Ovary (tissue), 10 donors: ENCODE measurements at regions of chr12 and their contacts with region 1.

Region 1: DNA sequence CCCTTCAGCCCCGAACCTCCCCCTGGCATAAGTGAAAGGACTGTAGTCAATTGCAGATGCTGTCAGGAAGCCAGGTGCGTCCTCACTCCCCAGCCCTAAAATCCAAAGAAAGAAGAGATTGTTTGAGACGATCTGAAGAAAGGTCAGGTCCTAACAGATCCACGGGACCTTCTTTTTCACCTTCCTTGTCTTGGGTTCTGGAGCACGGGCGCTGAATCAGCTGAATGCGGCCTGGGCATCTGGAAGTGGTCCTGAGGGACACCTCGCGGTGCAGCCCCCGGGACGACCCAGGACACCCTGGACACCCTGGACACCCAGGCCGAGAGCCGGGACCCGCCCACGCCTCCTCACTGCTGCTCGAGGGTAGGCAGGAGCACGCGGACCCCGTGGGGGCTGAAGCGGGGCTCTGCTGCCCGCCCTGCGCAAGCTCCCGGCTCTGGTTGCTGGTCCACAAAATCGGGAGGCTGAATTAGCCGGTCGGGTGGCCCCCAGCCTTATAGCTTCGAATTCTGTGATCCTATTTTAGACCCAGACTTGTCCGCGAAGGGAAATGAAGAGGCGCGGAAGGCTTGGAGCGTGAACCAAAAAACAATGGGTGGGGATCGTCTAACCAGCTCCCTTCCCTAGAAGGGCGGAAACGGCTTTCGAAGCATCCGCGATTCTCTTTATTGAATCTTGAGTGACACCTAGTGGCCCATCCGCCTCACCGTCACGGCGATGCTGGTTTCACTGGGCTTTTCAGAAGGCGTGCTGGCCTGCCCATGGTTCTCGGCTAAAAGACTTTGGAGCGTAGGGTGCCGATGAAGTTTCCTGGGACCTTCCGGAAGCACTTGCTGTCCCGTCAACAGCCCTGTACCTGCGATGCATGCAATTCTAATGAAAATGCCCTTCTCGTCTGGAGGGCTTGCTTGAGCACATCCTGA is 46.4 kb upstream of the PLXNC1 start:
- DNase-seq: peak; percentile 76 to 88 (median 86)
- H3K4me3 ChIP-seq: peak overlapping the region; percentile 63
- H3K27ac ChIP-seq: no peak overlapping the region
- H3K4me1 ChIP-seq: no peaks in the 10 kb centered on the region
- H3K27me3 ChIP-seq: no peaks in the 10 kb centered on the region
- CTCF ChIP-seq: peak; percentile 69 to 79 (median 69)
- EP300 ChIP-seq: no peak
- POLR2A ChIP-seq: no peak

Region 2: DNA sequence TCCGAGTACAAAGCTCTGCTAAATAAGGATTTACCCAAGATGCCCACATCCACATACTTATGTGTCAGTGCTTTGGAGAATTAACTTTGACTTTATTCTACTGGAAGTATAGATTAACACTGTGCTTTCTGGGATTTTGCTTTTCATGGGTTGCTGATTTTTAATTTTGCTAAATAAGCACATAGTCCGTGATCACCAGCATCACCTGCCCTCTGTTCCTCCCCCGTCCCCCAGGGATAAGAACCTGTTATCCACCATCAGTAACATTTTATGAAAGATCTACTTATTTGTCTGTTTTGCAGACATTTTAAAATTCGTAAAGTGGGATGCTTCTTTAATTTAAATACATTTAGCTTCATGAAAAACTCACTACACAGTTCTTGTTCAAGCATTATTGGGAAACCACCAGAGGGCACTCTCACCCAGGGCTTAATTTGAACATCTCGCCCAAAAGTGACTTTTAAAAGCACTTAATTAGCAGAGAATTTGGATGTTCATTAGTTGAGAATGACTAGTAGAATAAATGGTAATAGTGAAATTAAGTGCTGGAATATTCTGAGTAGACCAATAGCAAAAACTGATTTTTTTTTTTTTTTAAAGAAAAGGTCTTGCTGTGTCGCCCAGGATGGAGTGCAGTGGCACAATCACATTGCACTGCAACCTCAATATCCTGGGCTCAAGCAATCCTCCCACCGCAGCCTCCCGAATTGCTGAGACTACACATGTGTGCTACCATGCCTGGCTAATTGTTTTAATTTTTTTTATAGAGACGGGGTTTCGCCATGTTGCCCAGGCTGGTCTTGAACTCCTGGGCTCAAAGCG is 599.0 kb before region 1 on chr12:
- intact Hi-C with region 1: loop called (anchors 2 to 5 kb)
- DNase-seq: peak in 4 of 5 donors; percentile 12 to 58 (median 37)
- H3K4me3 ChIP-seq: no peak overlapping the region
- H3K27ac ChIP-seq: no peak overlapping the region
- H3K4me1 ChIP-seq: no peaks in the 10 kb centered on the region
- H3K27me3 ChIP-seq: no peaks in the 10 kb centered on the region
- CTCF ChIP-seq: peak; percentile 53 to 77 (median 63)
- EP300 ChIP-seq: no peak
- POLR2A ChIP-seq: no peak

Region 3: DNA sequence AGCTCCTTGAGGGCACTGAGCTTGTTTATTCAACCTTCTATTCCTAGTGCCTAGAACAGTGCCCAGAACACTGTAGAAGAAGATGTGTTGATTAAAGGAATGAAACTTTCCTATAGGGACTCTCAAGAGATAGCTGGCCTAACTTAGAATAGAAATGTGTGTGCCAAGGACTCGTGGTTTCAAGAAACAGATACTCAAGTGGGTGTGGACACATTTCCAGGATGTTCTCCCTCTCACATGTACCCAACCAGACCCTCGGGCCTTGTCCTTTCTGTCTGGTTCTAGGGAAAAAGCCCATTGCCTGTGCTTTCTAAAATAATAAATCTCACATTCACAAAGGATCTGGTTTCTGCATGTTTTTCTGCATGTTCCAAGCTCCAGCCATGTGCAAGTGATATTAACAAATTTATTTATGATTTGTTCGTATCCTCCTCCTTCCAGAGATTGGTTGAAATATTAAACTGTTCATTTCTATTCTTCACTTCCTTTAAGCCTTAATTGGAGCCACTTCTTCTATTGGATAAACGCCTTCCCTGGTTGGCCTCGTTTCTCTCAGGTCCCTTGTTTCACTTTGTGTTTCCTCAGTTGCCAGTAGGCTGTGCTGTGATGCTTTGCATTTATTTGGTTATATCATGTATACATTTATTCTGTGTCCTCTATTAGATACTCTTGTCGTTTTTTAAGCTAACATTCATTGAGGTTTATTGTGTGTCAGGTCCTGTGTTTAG is 335.0 kb before region 1 on chr12:
- intact Hi-C with region 1: loop called (anchors 5 to 10 kb)
- DNase-seq: peak in 1 of 5 donors; percentile 42
- H3K4me3 ChIP-seq: no peak overlapping the region
- H3K27ac ChIP-seq: no peak overlapping the region
- H3K4me1 ChIP-seq: peaks cover 6% of the 10 kb centered on the region
- H3K27me3 ChIP-seq: no peaks in the 10 kb centered on the region
- CTCF ChIP-seq: peak in 2 of 3 donors; percentile 51 to 54
- EP300 ChIP-seq: no peak
- POLR2A ChIP-seq: no peak

Region 4: GRCh38 chr12:93894391-93895088 is 207.5 kb before region 1 on chr12:
- intact Hi-C with region 1: no loop called
- DNase-seq: peak; percentile 70 to 82 (median 74)
- H3K4me3 ChIP-seq: no peak overlapping the region
- H3K27ac ChIP-seq: peak overlapping the region in 1 of 2 donors; percentile 29
- H3K4me1 ChIP-seq: peaks cover 15% of the 10 kb centered on the region
- H3K27me3 ChIP-seq: no peaks in the 10 kb centered on the region
- CTCF ChIP-seq: no peak
- EP300 ChIP-seq: no peak
- POLR2A ChIP-seq: no peak